OCI-LY7 (cell line): ENCODE measurements at regions of chr13 and their contacts with region 1.

Region 1: GRCh38 chr13:70568571-70568970 is 460.3 kb upstream of the KLHL1 start:
- DNase-seq: peak; percentile 38
- H3K4me3 ChIP-seq: no peak overlapping the region
- H3K27ac ChIP-seq: no peak overlapping the region
- H3K4me1 ChIP-seq: no peaks in the 10 kb centered on the region
- CTCF ChIP-seq: peak; percentile 87

Region 2: GRCh38 chr13:69857183-69857821 is 711.3 kb before region 1 on chr13:
- CTCF ChIA-PET with region 1: no interaction called
- POLR2A ChIA-PET with region 1: no interaction called
- intact Hi-C with region 1: loop called (anchors 5 kb)
- DNase-seq: peak; percentile 63
- H3K4me3 ChIP-seq: no peak overlapping the region
- H3K27ac ChIP-seq: no peak overlapping the region
- H3K4me1 ChIP-seq: no peaks in the 10 kb centered on the region
- CTCF ChIP-seq: peak; percentile 92